ENCODE measurements at regions of chr5 and their contacts with region 1.

Region 1: GRCh38 chr5:34007621-34008600 is at the start of gene AMACR:
- DNase-seq: peak; percentile 88

Region 2: DNA sequence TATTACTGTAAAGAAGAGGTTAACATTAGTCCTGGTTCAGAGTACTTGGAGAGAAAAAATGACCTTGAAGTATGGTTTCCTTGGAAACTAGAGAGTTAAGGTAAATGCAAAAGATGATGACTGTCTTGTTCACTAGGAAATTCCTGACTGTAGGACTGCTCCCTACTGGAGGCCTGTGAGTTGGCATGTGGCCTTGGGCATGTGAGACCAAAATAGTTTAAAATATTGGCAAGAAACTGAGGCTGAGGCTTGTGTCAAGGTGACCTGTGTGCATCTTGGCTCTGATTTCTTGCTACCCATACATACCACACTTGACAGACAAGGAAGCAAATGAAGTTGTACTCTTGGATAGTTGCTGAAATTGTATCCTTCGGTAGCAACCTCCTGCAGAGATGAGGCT is 470.7 kb before region 1 on chr5:
- CTCF ChIA-PET with region 1: no interaction called
- POLR2A ChIA-PET with region 1: no interaction called
- DNase-seq: no peak

Region 3: GRCh38 chr5:34022121-34022705 is 14.3 kb after region 1 on chr5:
- CTCF ChIA-PET with region 1: no interaction called
- POLR2A ChIA-PET with region 1: interaction called, 10 read pairs
- DNase-seq: no peak